ENCODE measurements at regions of chr14 and their contacts with region 1.

Region 1: DNA sequence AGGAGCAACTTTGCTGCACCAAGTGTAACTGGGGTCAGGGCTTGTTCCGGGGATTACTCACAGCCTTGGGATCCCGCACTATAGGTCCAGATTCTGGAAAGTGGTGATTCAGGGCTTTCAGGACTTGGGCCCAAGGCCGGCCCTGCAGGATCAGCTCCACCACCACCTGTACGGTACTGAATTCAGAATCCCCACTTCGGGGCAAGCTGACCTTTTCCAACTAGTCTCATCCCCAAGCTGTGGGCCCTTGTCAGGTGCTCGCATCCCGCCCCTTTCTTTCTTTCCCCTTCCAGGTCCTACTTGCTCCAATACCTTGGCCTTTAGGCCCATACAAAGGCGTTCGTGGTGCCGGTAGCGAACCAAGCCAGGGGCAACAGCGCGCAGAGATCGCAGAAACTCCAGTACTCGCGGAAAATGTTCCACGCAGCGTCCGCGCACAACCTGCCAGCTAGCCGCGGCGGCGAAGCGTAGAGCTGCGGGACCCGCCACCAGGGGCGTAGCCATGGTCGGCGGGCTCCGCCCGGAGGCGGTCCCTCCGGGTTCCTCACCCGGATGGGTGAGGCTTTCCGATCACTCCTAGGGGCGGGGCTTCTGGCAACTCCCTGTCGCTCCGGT is 487 bp downstream of the TINF2 start:
- DNase-seq: no peak
- H3K4me3 ChIP-seq: peak overlapping the region; percentile 31 to 67 (median 57)
- H3K27ac ChIP-seq: peak overlapping the region; percentile 98
- H3K4me1 ChIP-seq: peaks cover 30% of the 10 kb centered on the region
- H3K27me3 ChIP-seq: no peaks in the 10 kb centered on the region
- CTCF ChIP-seq: peak; percentile 16 to 75
- POLR2A ChIP-seq: no peak

Region 2: DNA sequence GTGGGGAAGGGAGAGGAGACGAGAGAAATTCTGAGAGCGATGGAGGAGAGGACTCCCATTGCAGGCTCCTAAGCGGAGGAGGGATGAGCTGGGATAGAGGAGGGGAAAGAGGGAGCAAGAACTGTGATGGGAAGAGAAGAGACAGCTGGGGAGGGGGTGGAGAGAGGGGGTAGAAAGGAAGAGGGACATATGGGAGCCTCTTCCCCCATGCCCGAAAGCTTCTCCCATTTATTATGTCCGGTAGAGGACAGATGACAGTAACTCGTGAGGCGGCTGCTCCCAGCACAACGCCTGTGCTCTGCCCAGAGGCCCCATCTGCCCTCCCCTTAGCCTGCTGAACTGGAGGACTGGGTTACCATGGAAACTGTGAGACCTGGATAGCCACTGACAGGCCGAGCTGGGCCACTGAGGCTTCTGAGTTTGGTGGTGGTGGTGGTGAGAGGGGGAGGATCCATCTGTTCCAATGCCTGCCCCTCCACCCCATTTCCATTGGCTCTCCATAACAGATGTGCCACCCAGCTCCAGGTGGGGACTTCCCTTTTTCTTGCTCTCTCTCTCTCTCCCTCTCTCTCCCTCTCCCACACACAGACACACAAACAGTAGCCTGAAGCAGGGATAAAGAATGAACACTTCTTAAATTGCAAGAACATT is 162.3 kb before region 1 on chr14:
- CTCF ChIA-PET with region 1: no interaction called
- POLR2A ChIA-PET with region 1: no interaction called
- dilution Hi-C with region 1: no loop called
- intact Hi-C with region 1: no loop called
- DNase-seq: no peak
- H3K4me3 ChIP-seq: no peak overlapping the region
- H3K27ac ChIP-seq: no peak overlapping the region
- H3K4me1 ChIP-seq: no peaks in the 10 kb centered on the region
- H3K27me3 ChIP-seq: peaks cover 27 to 35% of the 10 kb centered on the region in 2 experiments
- CTCF ChIP-seq: no peak
- POLR2A ChIP-seq: no peak

Region 3: DNA sequence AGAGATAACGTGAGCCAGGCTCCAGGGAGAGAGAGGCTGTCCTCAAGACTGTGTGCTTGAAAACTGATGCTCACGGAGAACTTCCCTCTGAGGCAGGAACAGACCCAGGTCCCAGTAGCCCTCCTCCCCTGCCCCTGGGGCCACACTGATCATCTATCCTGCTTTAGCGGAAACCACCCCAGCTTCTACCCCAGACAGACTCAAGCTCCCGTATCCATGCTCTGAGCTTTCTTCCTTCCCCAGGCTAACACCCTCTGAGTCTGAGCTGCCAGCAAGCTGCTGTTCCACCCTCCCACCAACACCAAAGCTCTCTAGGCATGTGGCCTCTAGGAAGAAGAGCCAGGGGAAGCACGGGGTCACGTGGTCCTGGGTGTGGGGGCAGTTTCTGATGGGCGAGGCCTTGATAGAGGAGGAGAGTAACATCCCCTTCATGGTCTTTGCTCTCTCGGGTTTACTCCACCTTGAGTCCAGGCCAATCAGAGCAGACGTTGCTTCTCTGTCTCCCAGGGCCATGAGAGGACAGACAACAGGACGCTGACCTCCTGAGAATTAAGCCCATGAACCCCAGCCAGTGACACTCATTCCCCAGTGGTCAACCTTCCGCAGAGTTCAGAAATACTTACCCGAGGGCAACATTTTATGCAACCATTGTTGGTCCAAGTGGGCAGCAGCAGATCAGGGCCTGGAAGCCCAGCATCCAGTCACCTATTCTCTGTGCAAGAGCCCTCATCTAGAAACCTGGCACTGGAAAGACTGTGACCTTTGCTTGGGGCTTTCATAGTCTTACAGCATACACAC is 146.5 kb before region 1 on chr14:
- CTCF ChIA-PET with region 1: no interaction called
- POLR2A ChIA-PET with region 1: no interaction called
- dilution Hi-C with region 1: no loop called
- intact Hi-C with region 1: no loop called
- DNase-seq: peak; percentile 21
- H3K4me3 ChIP-seq: peak overlapping the region in 2 of 3 experiments; percentile 71 to 74
- H3K27ac ChIP-seq: peak overlapping the region; percentile 46
- H3K4me1 ChIP-seq: peaks cover 9% of the 10 kb centered on the region
- H3K27me3 ChIP-seq: no peaks in the 10 kb centered on the region
- CTCF ChIP-seq: no peak
- POLR2A ChIP-seq: no peak

Region 4: GRCh38 chr14:24188251-24189058 is 53.5 kb before region 1 on chr14 and contains the start of gene IPO4:
- CTCF ChIA-PET with region 1: no interaction called
- POLR2A ChIA-PET with region 1: no interaction called
- dilution Hi-C with region 1: no loop called
- intact Hi-C with region 1: loop called (anchors 1 kb)
- DNase-seq: peak; percentile 94
- H3K4me3 ChIP-seq: peak within 1 kb of the TSS; percentile 31 to 65 (median 37)
- H3K27ac ChIP-seq: peak within 1 kb of the TSS; percentile 45
- H3K4me1 ChIP-seq: peaks cover 6% of the 10 kb centered on the region
- H3K27me3 ChIP-seq: no peaks in the 10 kb centered on the region
- CTCF ChIP-seq: no peak
- POLR2A ChIP-seq: peak; percentile 94
- total RNA-seq, gene IPO4: 52.6 and 66.5 TPM in 2 replicates

Region 5: DNA sequence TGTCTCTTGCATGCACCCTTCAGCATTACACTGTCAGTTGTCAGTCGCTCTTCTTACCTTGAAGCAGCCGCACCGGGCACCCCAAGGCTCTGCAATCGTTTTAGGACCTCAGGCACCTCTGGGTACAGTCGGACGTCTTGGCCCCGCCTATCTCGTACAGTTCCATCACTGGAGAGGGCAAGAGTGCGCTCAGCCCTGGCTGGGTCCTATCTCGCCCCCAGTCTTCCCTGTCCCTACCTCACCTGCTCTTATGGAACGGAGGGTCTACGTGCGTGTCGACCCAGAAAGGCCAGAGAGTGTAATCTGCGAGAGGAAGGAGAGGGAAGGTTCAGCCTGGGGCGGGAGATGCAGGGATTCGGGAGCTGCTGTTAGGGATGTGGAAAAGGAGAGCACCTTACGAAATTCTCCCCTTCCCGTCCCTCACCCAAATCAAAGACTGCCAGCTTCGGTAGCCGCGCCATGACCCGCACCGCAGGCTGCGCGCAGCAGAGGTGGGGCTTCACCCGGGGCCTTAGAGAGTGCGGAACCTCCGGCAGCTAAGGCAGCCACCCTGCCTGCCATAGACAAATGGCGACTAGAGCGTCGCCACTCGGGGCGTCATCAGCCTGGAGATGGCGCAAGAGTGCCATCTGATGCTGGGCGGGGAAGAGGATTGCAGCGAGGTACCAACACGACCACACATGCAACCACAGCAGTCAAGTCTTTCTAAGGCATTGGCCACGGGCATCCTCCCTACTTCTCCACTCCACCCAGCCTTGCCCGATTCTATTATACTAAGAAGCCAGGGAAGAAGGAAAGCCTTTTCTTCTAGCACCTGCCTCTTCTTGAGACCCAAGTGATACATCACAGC is 26.2 kb before region 1 on chr14 and contains the start of gene MDP1:
- CTCF ChIA-PET with region 1: interaction called, 71 read pairs
- POLR2A ChIA-PET with region 1: interaction called, 19 read pairs
- dilution Hi-C with region 1: no loop called
- intact Hi-C with region 1: loop called (anchors 1 kb)
- DNase-seq: peak; percentile 91
- H3K4me3 ChIP-seq: peak within 1 kb of the TSS; percentile 57 to 69 (median 64)
- H3K27ac ChIP-seq: peak within 1 kb of the TSS; percentile 61
- H3K4me1 ChIP-seq: peaks cover 11% of the 10 kb centered on the region
- H3K27me3 ChIP-seq: no peaks in the 10 kb centered on the region
- CTCF ChIP-seq: peak; percentile 84 to 86
- POLR2A ChIP-seq: peak; percentile 88
- total RNA-seq, gene MDP1: 8.1 and 9.9 TPM in 2 replicates

Region 6: DNA sequence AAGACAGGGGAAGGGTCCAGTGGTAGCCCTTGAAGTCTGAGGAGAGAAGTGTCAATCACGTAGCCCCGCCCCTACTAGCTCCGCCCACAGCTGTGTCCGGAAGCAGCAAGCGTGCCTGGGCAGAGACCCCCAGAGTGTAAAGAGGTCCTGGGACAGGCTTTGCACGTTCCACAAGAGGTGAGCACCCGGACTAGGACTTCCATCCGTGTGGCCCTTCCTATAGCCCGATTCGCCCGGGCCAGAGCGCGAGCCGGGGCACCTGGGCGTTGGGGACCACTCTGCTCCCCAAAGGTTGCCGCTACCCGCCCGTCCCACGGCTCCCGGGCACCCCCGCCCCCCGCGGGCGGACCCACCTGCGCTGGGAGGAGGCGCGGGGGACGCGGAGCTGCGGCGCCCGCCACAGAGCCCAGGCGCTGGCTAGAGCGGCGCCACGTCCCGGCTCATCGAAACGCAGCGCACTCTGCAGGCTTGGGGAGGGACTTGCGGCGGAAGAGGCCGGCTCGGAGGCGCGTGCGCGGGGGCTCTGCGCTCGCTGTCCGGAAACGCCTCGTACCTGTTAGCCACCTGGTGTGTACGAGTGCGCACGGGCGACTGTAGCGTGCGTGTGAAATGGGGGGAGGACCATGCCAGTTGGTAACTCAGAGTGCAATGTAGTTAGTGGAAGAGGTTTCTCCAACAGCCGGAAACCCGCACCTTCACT is 29.3 kb after region 1 on chr14 and contains the start of gene RABGGTA:
- CTCF ChIA-PET with region 1: interaction called, 35 read pairs
- POLR2A ChIA-PET with region 1: interaction called, 17 read pairs
- dilution Hi-C with region 1: no loop called
- intact Hi-C with region 1: loop called (anchors 1 kb)
- DNase-seq: peak; percentile 79
- H3K4me3 ChIP-seq: peak within 1 kb of the TSS; percentile 58 to 77 (median 65)
- H3K27ac ChIP-seq: peak within 1 kb of the TSS; percentile 92
- H3K4me1 ChIP-seq: peaks cover 9% of the 10 kb centered on the region
- H3K27me3 ChIP-seq: no peaks in the 10 kb centered on the region
- CTCF ChIP-seq: peak; percentile 74 to 85
- POLR2A ChIP-seq: peak; percentile 81
- total RNA-seq, gene RABGGTA: 29.3 and 29.5 TPM in 2 replicates

Region 7: DNA sequence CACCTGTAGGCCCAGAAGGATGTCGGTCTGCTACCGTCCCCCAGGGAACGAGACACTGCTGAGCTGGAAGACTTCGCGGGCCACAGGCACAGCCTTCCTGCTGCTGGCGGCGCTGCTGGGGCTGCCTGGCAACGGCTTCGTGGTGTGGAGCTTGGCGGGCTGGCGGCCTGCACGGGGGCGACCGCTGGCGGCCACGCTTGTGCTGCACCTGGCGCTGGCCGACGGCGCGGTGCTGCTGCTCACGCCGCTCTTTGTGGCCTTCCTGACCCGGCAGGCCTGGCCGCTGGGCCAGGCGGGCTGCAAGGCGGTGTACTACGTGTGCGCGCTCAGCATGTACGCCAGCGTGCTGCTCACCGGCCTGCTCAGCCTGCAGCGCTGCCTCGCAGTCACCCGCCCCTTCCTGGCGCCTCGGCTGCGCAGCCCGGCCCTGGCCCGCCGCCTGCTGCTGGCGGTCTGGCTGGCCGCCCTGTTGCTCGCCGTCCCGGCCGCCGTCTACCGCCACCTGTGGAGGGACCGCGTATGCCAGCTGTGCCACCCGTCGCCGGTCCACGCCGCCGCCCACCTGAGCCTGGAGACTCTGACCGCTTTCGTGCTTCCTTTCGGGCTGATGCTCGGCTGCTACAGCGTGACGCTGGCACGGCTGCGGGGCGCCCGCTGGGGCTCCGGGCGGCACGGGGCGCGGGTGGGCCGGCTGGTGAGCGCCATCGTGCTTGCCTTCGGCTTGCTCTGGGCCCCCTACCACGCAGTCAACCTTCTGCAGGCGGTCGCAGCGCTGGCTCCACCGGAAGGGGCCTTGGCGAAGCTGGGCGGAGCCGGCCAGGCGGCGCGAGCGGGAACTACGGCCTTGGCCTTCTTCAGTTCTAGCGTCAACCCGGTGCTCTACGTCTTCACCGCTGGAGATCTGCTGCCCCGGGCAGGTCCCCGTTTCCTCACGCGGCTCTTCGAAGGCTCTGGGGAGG is 69.0 kb after region 1 on chr14 and contains the start of gene LTB4R:
- CTCF ChIA-PET with region 1: interaction called, 70 read pairs
- POLR2A ChIA-PET with region 1: interaction called, 5 read pairs
- dilution Hi-C with region 1: no loop called
- intact Hi-C with region 1: loop called (anchors 1 kb)
- DNase-seq: peak; percentile 88
- H3K4me3 ChIP-seq: peak within 1 kb of the TSS in 1 of 3 experiments; percentile 19
- H3K27ac ChIP-seq: peak within 1 kb of the TSS; percentile 91
- H3K4me1 ChIP-seq: peaks cover 60% of the 10 kb centered on the region
- H3K27me3 ChIP-seq: no peaks in the 10 kb centered on the region
- CTCF ChIP-seq: peak; percentile 20 to 53
- POLR2A ChIP-seq: peak; percentile 34
- total RNA-seq, gene LTB4R: 6.2 and 10.5 TPM in 2 replicates

Region 8: GRCh38 chr14:24828486-24828885 is 586.5 kb after region 1 on chr14:
- CTCF ChIA-PET with region 1: no interaction called
- POLR2A ChIA-PET with region 1: no interaction called
- dilution Hi-C with region 1: no loop called
- intact Hi-C with region 1: no loop called
- DNase-seq: no peak
- H3K4me3 ChIP-seq: no peak overlapping the region
- H3K27ac ChIP-seq: no peak overlapping the region
- H3K4me1 ChIP-seq: no peaks in the 10 kb centered on the region
- H3K27me3 ChIP-seq: peaks cover 0 to 2% of the 10 kb centered on the region in 2 experiments
- CTCF ChIP-seq: no peak
- POLR2A ChIP-seq: no peak